ENCODE measurements at regions of chr18 and their contacts with region 1.

Region 1: GRCh38 chr18:9136315-9137155 is at the start of gene ANKRD12:
- DNase-seq: peak; percentile 97 to 98
- H3K4me3 ChIP-seq: peak within 1 kb of the TSS; percentile 96
- H3K4me3 Mint-ChIP-seq: peak within 1 kb of the TSS; percentile 94
- H3K27ac Mint-ChIP-seq: peak within 1 kb of the TSS; percentile 96
- H3K4me1 ChIP-seq: peaks cover 22% of the 10 kb centered on the region
- H3K4me1 Mint-ChIP-seq: peaks cover 22% of the 10 kb centered on the region
- H3K27me3 ChIP-seq: no peaks in the 10 kb centered on the region
- H3K27me3 Mint-ChIP-seq: no peaks in the 10 kb centered on the region
- CTCF ChIP-seq: no peak
- total RNA-seq, gene ANKRD12: 33.2 and 36.5 TPM in 2 replicates

Region 2: GRCh38 chr18:8876887-8877286 is 259.6 kb before region 1 on chr18:
- CTCF ChIA-PET with region 1: no interaction called
- POLR2A ChIA-PET with region 1: no interaction called
- intact Hi-C with region 1: no loop called
- DNase-seq: no peak
- H3K4me3 ChIP-seq: no peak overlapping the region
- H3K4me3 Mint-ChIP-seq: no peak overlapping the region
- H3K27ac Mint-ChIP-seq: no peak overlapping the region
- H3K4me1 ChIP-seq: no peaks in the 10 kb centered on the region
- H3K4me1 Mint-ChIP-seq: peaks cover 4% of the 10 kb centered on the region
- H3K27me3 ChIP-seq: no peaks in the 10 kb centered on the region
- H3K27me3 Mint-ChIP-seq: no peaks in the 10 kb centered on the region
- CTCF ChIP-seq: no peak

Region 3: DNA sequence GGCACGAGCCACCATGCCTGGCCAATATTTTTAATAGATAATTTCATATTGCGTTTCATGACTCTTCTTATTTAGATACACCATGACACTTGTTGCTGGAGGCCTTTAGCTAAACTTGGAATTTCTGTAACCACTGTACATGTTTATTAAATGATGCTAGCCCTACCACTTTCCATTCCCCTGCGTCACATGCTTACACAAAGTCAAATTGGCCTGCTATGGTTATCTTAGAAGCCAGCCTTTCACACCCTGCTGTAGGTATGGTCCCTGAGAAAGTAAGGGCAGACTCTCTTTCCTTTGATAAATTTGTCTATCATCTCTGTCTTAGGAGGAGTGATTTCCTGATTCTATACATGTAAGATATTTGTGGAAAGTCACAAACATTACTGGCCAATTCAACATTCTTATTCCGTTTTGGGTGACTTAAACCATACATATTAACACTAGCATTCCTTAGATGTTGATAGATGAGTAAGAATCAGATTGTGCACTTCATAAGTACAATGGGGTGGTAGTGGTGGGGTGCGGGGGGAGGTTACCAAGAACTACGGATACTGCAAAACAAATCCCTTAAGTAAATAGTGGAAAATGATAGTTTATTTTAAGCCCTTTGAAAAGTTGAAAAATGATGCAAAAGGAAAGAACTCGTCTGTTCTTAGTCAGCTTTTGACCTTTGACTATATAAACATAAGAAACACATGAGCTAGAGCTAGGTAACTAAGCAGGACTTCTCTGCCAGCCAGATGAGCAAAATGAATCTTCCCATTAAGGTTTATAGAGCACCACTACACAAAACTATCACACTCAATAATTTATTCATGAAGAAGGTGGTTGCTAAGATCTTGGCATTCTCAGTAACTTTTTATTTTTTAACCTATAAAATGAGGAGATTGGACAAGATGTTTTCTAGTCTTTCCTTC is 42.0 kb before region 1 on chr18:
- CTCF ChIA-PET with region 1: no interaction called
- POLR2A ChIA-PET with region 1: no interaction called
- intact Hi-C with region 1: loop called (anchors 2 kb)
- DNase-seq: peak in 1 of 2 experiments; percentile 25
- H3K4me3 ChIP-seq: no peak overlapping the region
- H3K4me3 Mint-ChIP-seq: peak overlapping the region; percentile 1
- H3K27ac Mint-ChIP-seq: peak overlapping the region; percentile 81
- H3K4me1 ChIP-seq: peaks cover 37% of the 10 kb centered on the region
- H3K4me1 Mint-ChIP-seq: peaks cover 26% of the 10 kb centered on the region
- H3K27me3 ChIP-seq: no peaks in the 10 kb centered on the region
- H3K27me3 Mint-ChIP-seq: no peaks in the 10 kb centered on the region
- CTCF ChIP-seq: no peak

Region 4: GRCh38 chr18:9233771-9234440 is 97.4 kb after region 1 on chr18:
- CTCF ChIA-PET with region 1: no interaction called
- POLR2A ChIA-PET with region 1: no interaction called
- intact Hi-C with region 1: no loop called
- DNase-seq: no peak
- H3K4me3 ChIP-seq: no peak overlapping the region
- H3K4me3 Mint-ChIP-seq: no peak overlapping the region
- H3K27ac Mint-ChIP-seq: no peak overlapping the region
- H3K4me1 ChIP-seq: no peaks in the 10 kb centered on the region
- H3K4me1 Mint-ChIP-seq: no peaks in the 10 kb centered on the region
- H3K27me3 ChIP-seq: no peaks in the 10 kb centered on the region
- H3K27me3 Mint-ChIP-seq: no peaks in the 10 kb centered on the region
- CTCF ChIP-seq: no peak

Region 5: GRCh38 chr18:9296233-9297006 is 159.9 kb after region 1 on chr18:
- CTCF ChIA-PET with region 1: no interaction called
- POLR2A ChIA-PET with region 1: no interaction called
- intact Hi-C with region 1: no loop called
- DNase-seq: no peak
- H3K4me3 ChIP-seq: no peak overlapping the region
- H3K4me3 Mint-ChIP-seq: no peak overlapping the region
- H3K27ac Mint-ChIP-seq: no peak overlapping the region
- H3K4me1 ChIP-seq: no peaks in the 10 kb centered on the region
- H3K4me1 Mint-ChIP-seq: no peaks in the 10 kb centered on the region
- H3K27me3 ChIP-seq: no peaks in the 10 kb centered on the region
- H3K27me3 Mint-ChIP-seq: no peaks in the 10 kb centered on the region
- CTCF ChIP-seq: no peak